ENCODE measurements at regions of chr3 and their contacts with region 1.

Region 1: GRCh38 chr3:52123106-52123725 is 31.0 kb downstream of the POC1A start:
- DNase-seq: peak; percentile 84
- ATAC-seq: peak; percentile 95
- H3K4me3 Mint-ChIP-seq: no peak overlapping the region
- H3K27ac Mint-ChIP-seq: no peak overlapping the region
- H3K4me1 Mint-ChIP-seq: no peaks in the 10 kb centered on the region
- H3K27me3 Mint-ChIP-seq: no peaks in the 10 kb centered on the region
- CTCF ChIP-seq: peak; percentile 96

Region 2: DNA sequence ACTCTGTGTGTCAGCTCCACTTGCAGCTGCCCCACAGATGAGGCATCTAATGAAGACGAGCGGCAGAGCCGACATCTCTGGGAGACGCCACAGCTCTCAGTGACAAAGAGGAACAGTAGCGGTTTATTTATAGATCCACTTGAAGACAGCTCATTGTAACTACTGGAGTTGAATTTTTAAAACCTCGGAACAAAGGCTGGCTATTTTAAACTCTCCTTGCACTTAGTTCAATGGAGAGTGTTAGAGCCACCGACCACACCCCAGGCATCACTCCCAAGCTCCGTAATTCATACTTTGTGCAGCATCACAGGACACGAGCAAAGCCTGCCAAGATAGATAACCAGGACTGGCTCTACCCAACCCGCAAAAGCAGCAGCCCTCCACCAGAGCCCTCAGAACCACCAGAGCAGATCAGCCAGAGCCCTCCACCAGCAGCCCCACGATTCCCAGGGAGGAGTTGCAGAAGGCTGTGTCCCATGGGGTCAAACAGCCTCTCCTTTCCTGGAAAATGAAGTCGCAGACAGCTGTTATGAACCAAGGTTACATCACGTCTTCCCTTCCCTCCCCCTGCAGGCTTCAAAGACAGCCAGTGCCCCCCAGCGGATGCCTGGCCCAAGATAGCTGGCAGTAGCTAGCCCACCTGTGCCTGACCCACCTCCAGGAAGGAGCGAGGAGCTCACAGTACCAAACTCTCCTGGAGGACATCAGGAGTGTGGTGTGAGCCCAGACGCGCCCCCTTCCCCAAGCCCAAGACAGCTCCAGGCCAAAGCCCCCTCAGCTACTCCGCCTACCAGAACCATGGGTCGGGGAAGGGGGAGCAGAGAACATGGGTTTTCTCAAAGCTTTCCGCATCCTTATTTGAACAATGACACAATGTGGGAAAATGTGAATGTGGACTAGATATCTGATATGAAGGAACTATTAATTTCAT is 14.6 kb before region 1 on chr3:
- CTCF ChIA-PET with region 1: interaction called, 12 read pairs
- POLR2A ChIA-PET with region 1: no interaction called
- DNase-seq: peak; percentile 30
- ATAC-seq: peak; percentile 80
- H3K4me3 Mint-ChIP-seq: no peak overlapping the region
- H3K27ac Mint-ChIP-seq: peak overlapping the region; percentile 30; the same call in 1 of the 2 replicates
- H3K4me1 Mint-ChIP-seq: peaks cover 3% of the 10 kb centered on the region; the same call in 1 of the 2 replicates
- H3K27me3 Mint-ChIP-seq: no peaks in the 10 kb centered on the region
- CTCF ChIP-seq: no peak

Region 3: GRCh38 chr3:52162250-52162872 is 39.1 kb after region 1 on chr3:
- CTCF ChIA-PET with region 1: no interaction called
- POLR2A ChIA-PET with region 1: no interaction called
- DNase-seq: no peak
- ATAC-seq: no peak
- H3K4me3 Mint-ChIP-seq: no peak overlapping the region
- H3K27ac Mint-ChIP-seq: no peak overlapping the region
- H3K4me1 Mint-ChIP-seq: peaks cover 15% of the 10 kb centered on the region
- H3K27me3 Mint-ChIP-seq: peaks cover 7% of the 10 kb centered on the region
- CTCF ChIP-seq: no peak

Measured in WTC11 (cell line).